Activated CD8-positive, alpha-beta T cell treated with anti-CD3 and anti-CD28 coated beads for 36 hours (primary cell): ENCODE measurements at regions of chr2 and their contacts with region 1.

Region 1: DNA sequence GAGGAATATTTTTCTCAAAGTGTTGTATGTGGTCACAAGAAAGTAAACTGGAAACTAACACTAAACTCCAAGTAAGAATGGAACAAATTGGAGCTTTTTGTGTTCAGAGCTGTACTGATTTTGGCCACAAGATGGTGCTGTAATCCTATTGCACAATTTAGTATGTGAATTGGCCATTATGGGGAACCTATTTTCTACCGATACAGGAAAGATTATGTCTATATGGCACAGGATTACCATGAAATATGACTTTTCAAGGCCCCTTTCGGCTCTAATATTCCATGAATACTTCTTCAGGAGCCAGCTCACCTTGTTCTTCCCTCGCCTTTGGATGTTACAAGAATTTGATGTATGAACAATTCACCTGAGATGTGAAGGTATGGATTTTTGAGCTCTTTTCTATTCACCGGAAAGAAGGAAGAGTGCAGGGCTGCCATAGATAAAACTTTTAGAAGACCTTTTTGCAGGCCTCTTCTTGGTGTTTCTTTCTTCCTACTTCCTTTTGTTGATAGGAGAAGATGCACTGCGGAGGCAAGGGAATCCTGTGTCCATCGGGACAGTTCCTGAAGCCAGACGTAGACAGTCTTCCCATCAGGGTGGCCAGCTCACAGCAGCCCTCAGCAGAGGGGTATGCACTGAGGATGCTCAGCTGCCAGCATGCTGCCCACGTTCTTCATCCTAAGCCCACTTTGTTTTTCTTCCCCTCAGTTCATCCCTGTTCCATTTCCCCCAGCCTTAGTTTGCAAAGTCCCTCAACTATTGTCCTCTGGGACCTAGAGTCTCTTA is 13.3 kb downstream of the MRPL44 start:
- DNase-seq: peak; percentile 68
- ATAC-seq: peak; percentile 79
- H3K4me3 Mint-ChIP-seq: no peak overlapping the region
- H3K27ac Mint-ChIP-seq: no peak overlapping the region
- H3K4me1 Mint-ChIP-seq: peaks cover 10% of the 10 kb centered on the region
- H3K27me3 Mint-ChIP-seq: no peaks in the 10 kb centered on the region
- CTCF ChIP-seq: peak; percentile 88

Region 2: GRCh38 chr2:223696719-223697118 is 273.8 kb before region 1 on chr2:
- CTCF ChIA-PET with region 1: no interaction called
- POLR2A ChIA-PET with region 1: no interaction called
- intact Hi-C with region 1: no loop called
- DNase-seq: no peak
- ATAC-seq: no peak
- H3K4me3 Mint-ChIP-seq: no peak overlapping the region
- H3K27ac Mint-ChIP-seq: no peak overlapping the region
- H3K4me1 Mint-ChIP-seq: peaks cover 5% of the 10 kb centered on the region
- H3K27me3 Mint-ChIP-seq: peaks cover 10% of the 10 kb centered on the region
- CTCF ChIP-seq: no peak

Region 3: GRCh38 chr2:223957092-223957851 is 13.3 kb before region 1 on chr2 and contains the start of gene MRPL44:
- CTCF ChIA-PET with region 1: interaction called, 46 read pairs
- POLR2A ChIA-PET with region 1: interaction called, 5 read pairs
- intact Hi-C with region 1: no loop called
- DNase-seq: peak; percentile 97
- ATAC-seq: peak; percentile 99
- H3K4me3 Mint-ChIP-seq: peak within 1 kb of the TSS; percentile 93
- H3K27ac Mint-ChIP-seq: peak within 1 kb of the TSS; percentile 90
- H3K4me1 Mint-ChIP-seq: peaks cover 72% of the 10 kb centered on the region
- H3K27me3 Mint-ChIP-seq: no peaks in the 10 kb centered on the region
- CTCF ChIP-seq: no peak
- total RNA-seq, gene MRPL44: 37.8 to 40.4 TPM

Region 4: GRCh38 chr2:224025874-224026273 is 55.3 kb after region 1 on chr2:
- CTCF ChIA-PET with region 1: interaction called, 12 read pairs
- POLR2A ChIA-PET with region 1: no interaction called
- intact Hi-C with region 1: no loop called
- DNase-seq: peak; percentile 90
- ATAC-seq: peak; percentile 95
- H3K4me3 Mint-ChIP-seq: peak overlapping the region; percentile 59
- H3K27ac Mint-ChIP-seq: peak overlapping the region; percentile 92
- H3K4me1 Mint-ChIP-seq: peaks cover 81% of the 10 kb centered on the region
- H3K27me3 Mint-ChIP-seq: no peaks in the 10 kb centered on the region
- CTCF ChIP-seq: no peak

Region 5: GRCh38 chr2:224062481-224063297 is 92.2 kb after region 1 on chr2:
- CTCF ChIA-PET with region 1: interaction called, 16 read pairs
- POLR2A ChIA-PET with region 1: no interaction called
- intact Hi-C with region 1: no loop called
- DNase-seq: no peak
- ATAC-seq: no peak
- H3K4me3 Mint-ChIP-seq: no peak overlapping the region
- H3K27ac Mint-ChIP-seq: no peak overlapping the region
- H3K4me1 Mint-ChIP-seq: no peaks in the 10 kb centered on the region
- H3K27me3 Mint-ChIP-seq: no peaks in the 10 kb centered on the region
- CTCF ChIP-seq: no peak

Region 6: DNA sequence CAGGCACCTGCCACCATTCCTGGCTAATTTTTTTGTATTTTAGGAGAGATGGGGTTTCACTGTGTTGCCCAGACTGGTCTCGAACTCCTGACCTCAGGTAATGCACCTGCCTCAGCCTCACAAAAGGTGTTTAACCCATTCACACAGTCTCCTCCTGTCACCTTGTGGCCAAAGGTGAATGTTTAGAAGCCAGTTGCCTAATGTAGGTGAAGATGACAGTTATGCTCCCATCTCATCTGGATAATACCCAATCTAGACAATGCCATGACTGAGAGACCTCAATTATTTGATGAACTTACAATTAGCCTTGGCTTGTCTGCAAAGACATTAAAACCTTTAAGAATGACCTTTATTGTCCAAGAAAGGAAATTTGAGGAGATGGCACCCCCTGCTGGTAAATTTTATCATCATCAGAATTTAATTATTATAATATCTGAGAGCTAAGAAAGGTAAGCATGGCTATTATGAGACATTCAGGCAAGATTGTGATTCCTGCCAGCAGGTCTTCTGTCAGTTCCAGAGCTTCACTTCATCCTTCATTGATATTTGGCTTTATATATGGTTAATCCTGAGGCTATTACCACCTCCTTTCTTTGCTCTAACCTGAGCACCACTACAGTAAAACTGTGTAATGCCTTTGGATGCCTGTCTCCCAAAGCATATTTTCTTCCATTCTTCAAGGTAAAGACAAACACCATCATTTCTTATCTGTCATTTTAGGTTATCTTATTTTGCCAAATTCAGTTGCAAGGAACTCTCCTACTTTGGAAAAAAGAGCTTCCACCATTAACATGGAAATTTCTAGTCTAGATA is 313.8 kb after region 1 on chr2:
- CTCF ChIA-PET with region 1: interaction called, 242 read pairs
- POLR2A ChIA-PET with region 1: interaction called, 3 read pairs
- intact Hi-C with region 1: loop called (anchors 1 kb)
- DNase-seq: peak; percentile 17
- ATAC-seq: peak; percentile 42
- H3K4me3 Mint-ChIP-seq: no peak overlapping the region
- H3K27ac Mint-ChIP-seq: no peak overlapping the region
- H3K4me1 Mint-ChIP-seq: no peaks in the 10 kb centered on the region
- H3K27me3 Mint-ChIP-seq: peaks cover 13% of the 10 kb centered on the region
- CTCF ChIP-seq: peak; percentile 81